ENCODE measurements at regions of chr1 and their contacts with region 1.

Region 1: GRCh38 chr1:115138968-115139367 is 49.7 kb upstream of the TSPAN2 start:
- DNase-seq: peak; percentile 94
- H3K4me3 ChIP-seq: no peak overlapping the region
- H3K27ac ChIP-seq: no peak overlapping the region
- H3K4me1 ChIP-seq: no peaks in the 10 kb centered on the region
- H3K27me3 ChIP-seq: peaks cover 4% of the 10 kb centered on the region
- CTCF ChIP-seq: peak; percentile 95

Region 2: GRCh38 chr1:114948982-114949381 is 190.0 kb before region 1 on chr1:
- CTCF ChIA-PET with region 1: no interaction called
- POLR2A ChIA-PET with region 1: no interaction called
- intact Hi-C with region 1: no loop called
- DNase-seq: no peak
- H3K4me3 ChIP-seq: no peak overlapping the region
- H3K27ac ChIP-seq: no peak overlapping the region
- H3K4me1 ChIP-seq: no peaks in the 10 kb centered on the region
- H3K27me3 ChIP-seq: peaks cover 13% of the 10 kb centered on the region
- CTCF ChIP-seq: no peak

Region 3: GRCh38 chr1:115469703-115470476 is 330.9 kb after region 1 on chr1:
- CTCF ChIA-PET with region 1: interaction called, 9 read pairs
- POLR2A ChIA-PET with region 1: no interaction called
- intact Hi-C with region 1: loop called (anchors 1 kb)
- DNase-seq: peak; percentile 27
- H3K4me3 ChIP-seq: no peak overlapping the region
- H3K27ac ChIP-seq: no peak overlapping the region
- H3K4me1 ChIP-seq: no peaks in the 10 kb centered on the region
- H3K27me3 ChIP-seq: peaks cover 22% of the 10 kb centered on the region
- CTCF ChIP-seq: peak; percentile 97

Region 4: DNA sequence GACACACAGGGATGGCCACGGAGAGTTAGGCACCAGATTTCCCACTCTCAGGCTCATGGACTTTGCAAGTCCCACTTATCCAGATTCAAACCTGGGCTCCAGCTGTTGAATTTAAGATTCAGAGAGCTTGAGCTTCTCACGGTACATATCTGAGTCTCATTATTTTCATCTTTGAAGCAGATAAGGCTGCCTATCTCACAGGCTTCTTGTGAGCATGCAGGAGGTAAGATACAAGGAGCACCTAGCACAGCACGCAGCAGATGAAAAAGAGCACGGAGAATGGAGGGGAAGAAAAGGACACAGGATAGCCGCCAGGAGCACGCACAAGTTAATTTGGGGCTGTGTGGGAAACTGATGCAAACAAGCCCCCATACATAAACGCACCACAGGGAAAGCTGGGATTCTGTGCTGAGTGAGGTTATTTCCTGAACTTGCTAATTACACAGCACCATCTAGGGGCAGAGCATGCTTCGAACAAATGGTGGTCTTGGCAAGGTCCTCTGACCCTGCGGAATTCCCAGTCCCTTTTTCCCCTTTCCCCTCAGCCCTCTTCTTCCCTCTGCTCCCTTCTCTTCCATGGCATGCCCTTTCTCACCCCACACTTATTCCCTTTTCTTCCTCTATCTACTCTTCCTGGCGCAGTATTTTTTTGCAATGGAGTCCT is 368.1 kb after region 1 on chr1:
- CTCF ChIA-PET with region 1: no interaction called
- POLR2A ChIA-PET with region 1: no interaction called
- intact Hi-C with region 1: loop called (anchors 1 kb)
- DNase-seq: peak; percentile 67
- H3K4me3 ChIP-seq: no peak overlapping the region
- H3K27ac ChIP-seq: no peak overlapping the region
- H3K4me1 ChIP-seq: peaks cover 5% of the 10 kb centered on the region
- H3K27me3 ChIP-seq: peaks cover 5% of the 10 kb centered on the region
- CTCF ChIP-seq: peak; percentile 75

Measured in A673 (cell line).